Calu3 (cell line): ENCODE measurements at regions of chr16 and their contacts with region 1.

Region 1: GRCh38 chr16:55643161-55643970 is 12.4 kb upstream of the SLC6A2 start:
- DNase-seq: no peak
- H3K4me3 Mint-ChIP-seq: no peak overlapping the region
- H3K27ac Mint-ChIP-seq: no peak overlapping the region
- H3K4me1 Mint-ChIP-seq: no peaks in the 10 kb centered on the region
- H3K27me3 Mint-ChIP-seq: peaks cover 65% of the 10 kb centered on the region
- CTCF ChIP-seq: no peak

Region 2: DNA sequence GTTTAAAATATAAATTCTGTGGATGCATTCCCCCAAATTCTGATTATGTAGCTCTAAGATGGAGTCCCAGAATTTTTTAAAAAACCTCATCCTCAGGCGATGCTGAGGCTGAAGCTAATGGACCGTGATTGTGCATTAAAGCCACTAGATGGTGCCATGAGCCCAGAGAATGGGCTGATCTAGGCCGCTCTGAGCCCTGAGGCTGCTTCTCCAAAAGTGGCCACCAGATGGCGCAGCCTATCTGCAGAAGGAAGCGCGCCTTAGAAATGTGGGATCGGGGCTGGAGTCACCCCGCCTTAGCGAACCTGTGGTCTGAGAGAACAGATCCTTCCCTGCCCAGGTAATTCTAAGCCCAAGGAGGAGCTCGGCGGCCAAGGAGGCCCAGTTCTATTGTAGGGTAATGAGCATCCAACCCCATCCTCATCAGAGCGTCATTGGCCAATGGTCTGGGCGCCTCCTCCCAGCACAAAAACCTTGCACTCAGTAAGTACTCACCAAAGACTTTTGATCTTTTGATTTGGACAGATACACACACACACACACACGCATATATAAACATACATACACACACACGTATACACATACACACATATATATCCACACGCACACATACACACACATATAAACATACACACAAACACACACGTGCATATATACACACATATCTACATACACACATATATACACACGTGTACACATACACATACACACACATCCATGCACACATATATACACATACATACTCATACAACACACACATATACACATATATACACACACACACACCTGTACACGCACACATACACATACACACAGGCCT is 178.1 kb before region 1 on chr16:
- CTCF ChIA-PET with region 1: no interaction called
- intact Hi-C with region 1: loop called (anchors 10 kb)
- DNase-seq: peak; percentile 90
- H3K4me3 Mint-ChIP-seq: no peak overlapping the region
- H3K27ac Mint-ChIP-seq: no peak overlapping the region
- H3K4me1 Mint-ChIP-seq: no peaks in the 10 kb centered on the region
- H3K27me3 Mint-ChIP-seq: peaks cover 41% of the 10 kb centered on the region
- CTCF ChIP-seq: peak; percentile 100